G401 (cell line): ENCODE measurements at regions of chr1 and their contacts with region 1.

Region 1: DNA sequence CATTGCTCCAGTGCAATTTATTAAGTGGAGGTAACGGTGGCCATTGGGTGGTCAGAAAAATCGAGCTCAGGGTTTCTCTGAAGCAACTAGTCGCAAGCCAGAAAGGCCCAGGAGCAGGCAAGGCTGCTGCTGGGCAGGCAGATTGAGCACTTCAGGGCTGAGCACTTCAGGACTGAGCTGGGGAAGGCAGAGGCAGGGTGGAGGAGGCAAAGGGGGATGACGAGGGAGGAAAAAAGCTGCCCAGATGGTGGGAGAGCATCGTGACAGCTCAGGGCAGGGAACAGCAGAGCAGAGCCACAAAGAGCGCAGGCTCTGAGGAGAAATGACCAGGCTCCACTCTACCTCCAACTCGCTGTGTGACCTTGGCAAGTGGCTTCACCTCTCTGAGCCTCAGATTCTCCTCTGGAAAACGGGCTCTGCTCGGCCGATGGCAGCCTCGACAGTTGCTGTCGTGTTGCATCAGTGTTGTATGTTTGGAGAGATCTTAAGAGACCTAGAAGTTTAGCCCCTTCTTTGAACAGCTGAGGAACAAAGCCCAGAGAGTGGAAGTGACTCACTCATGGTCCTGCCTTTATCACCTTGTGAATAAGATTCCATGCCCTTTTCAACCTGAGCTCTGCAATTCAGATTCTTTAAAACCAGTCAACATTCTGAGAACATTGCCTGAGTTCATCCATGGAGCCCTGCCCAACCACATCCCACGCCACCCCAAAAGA is 141.4 kb downstream of the SYF2 start:
- DNase-seq: no peak

Region 2: GRCh38 chr1:24930204-24931145 is 160.4 kb before region 1 on chr1 and contains the start of gene RUNX3:
- in situ Hi-C with region 1: no loop called
- DNase-seq: no peak
- total RNA-seq, gene RUNX3: 0.17 TPM in 1 of 2 replicates, not detected in the other

Region 3: GRCh38 chr1:25042331-25043227 is 48.3 kb before region 1 on chr1:
- in situ Hi-C with region 1: loop called (anchors 5 kb)
- DNase-seq: no peak